ENCODE measurements at regions of chr14 and their contacts with region 1.

Region 1: DNA sequence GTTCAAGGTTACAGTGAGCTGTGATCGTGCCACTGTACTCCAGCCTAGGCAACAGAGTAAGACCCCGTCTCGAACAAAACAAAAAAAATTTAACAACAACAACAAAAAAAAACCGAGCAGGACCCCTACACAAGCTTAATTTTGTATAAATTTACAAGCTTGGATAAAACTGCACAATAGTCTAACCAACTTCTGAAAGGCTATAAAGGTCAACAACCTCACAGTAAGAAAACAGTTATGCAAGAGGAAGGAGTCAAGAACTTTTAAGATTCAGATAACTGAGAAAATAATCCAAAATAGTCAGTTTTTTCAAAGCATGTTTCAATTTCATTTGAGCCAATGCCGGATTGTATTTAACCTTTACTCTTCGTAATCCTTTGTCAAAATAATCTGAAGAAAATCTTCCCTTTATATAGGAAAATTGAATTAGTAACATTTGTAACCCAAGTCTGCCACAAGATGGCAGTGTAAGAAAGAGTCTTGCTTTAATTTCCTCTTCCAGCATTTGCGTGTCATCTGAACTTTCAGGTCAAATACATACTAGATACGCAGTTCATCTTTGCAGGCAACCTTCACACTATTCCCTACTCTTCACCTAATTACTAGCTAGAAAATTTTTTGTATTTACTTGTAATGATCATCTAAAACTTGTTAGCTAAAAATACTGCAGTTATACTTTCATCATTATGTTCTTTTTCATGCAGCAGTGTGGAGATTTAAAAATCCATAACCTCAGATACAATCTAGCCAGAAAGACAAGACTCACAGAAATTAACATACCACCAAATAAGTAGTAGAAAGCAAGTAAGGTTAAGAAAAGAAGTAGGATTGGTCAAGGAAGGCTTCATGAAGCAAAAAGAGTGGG is 5.8 kb downstream of the CCNB1IP1 start:
- DNase-seq: peak; percentile 52
- ATAC-seq: peak; percentile 65
- H3K4me3 Mint-ChIP-seq: no peak overlapping the region
- H3K27ac Mint-ChIP-seq: peak overlapping the region; percentile 13
- H3K4me1 Mint-ChIP-seq: peaks cover 42% of the 10 kb centered on the region
- H3K27me3 Mint-ChIP-seq: no peaks in the 10 kb centered on the region

Region 2: GRCh38 chr14:20059745-20060144 is 267.5 kb before region 1 on chr14 and contains the start of gene OR4L1:
- CTCF ChIA-PET with region 1: no interaction called
- POLR2A ChIA-PET with region 1: no interaction called
- DNase-seq: no peak
- ATAC-seq: no peak
- H3K4me3 Mint-ChIP-seq: no peak within 1 kb of the TSS
- H3K27ac Mint-ChIP-seq: no peak within 1 kb of the TSS
- H3K4me1 Mint-ChIP-seq: no peaks in the 10 kb centered on the region
- H3K27me3 Mint-ChIP-seq: no peaks in the 10 kb centered on the region
- total RNA-seq, gene OR4L1: not detected

Region 3: DNA sequence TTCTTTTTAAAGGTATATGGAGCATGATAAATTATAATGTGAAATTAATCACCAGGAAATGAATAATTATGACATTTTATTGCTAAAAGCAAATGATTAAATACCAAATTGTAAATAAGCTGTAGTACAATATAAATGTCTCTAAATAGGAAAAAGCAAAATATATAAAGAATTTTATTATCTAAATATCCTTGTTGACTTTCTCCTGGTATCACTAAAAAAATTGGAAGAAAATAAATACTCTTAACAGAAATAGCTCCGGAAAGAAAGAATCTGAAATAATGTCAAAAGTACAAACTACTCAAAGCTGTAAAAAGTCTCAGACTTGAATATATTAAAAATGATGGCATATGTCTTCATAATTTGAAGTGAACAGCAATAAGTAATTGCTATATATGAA is 98.6 kb before region 1 on chr14 and contains the start of gene OR11H7:
- CTCF ChIA-PET with region 1: no interaction called
- POLR2A ChIA-PET with region 1: no interaction called
- DNase-seq: no peak
- ATAC-seq: no peak
- H3K4me3 Mint-ChIP-seq: no peak within 1 kb of the TSS
- H3K27ac Mint-ChIP-seq: no peak within 1 kb of the TSS
- H3K4me1 Mint-ChIP-seq: no peaks in the 10 kb centered on the region
- H3K27me3 Mint-ChIP-seq: peaks cover 3% of the 10 kb centered on the region
- total RNA-seq, gene OR11H7: not detected

Region 4: DNA sequence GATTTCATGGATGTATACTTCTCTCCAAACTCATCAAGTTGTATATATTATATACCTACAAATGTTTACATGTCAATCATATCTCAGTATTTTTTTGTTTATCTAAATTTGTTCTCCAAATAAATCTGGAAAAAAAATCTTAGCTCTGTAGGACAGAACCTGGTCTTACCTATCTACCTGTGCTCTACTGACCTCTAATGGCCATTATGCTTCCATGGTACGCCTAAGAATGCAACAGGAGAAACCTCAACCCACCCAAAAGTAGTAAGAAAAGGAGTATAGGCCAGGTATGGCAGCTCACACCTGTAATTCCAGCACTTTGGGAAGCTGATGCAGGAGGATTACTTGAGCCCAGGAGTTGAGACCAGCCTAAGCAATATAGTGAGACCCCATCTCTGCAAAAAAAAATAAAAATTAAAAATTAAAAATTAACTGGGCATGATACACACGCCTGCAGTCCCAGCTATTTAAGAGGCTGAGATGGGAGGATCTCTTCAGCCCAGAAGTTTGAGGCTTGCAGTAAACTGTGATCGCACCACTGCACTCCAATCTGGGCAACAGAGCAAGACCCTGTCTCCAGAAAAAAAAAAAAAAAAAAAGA is 79.5 kb before region 1 on chr14:
- CTCF ChIA-PET with region 1: no interaction called
- POLR2A ChIA-PET with region 1: no interaction called
- DNase-seq: no peak
- ATAC-seq: no peak
- H3K4me3 Mint-ChIP-seq: no peak overlapping the region
- H3K27ac Mint-ChIP-seq: no peak overlapping the region
- H3K4me1 Mint-ChIP-seq: no peaks in the 10 kb centered on the region
- H3K27me3 Mint-ChIP-seq: no peaks in the 10 kb centered on the region

Region 5: DNA sequence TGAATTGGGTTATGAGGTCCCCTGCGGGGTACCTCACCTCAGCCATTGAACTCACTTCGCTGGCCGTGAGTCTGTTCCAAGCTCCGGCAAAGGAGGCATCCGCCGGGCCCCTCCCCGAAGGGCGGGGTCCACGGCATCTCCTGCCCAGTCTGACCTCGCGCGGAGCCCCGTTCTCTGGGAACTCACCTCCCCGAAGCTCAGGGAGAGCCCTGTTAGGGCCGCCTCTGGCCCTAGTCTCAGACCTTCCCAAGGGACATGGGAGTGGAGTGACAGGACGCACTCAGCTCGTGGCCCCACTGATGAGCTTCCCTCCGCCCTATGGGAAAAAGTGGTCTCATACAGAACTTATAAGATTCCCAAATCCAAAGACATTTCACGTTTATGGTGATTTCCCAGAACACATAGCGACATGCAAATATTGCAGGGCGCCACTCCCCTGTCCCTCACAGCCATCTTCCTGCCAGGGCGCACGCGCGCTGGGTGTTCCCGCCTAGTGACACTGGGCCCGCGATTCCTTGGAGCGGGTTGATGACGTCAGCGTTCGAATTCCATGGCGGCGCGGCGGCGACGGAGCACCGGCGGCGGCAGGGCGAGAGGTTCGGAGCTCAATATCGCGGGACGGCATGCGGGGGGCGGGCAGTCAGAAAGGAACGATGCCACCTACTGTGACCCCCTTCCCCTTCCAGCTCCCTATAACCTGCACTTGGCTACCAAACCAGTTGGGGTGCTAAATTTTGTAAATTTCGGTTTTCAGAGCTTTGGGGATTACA is 16.0 kb after region 1 on chr14 and contains the start of gene PARP2:
- CTCF ChIA-PET with region 1: interaction called, 120 read pairs
- POLR2A ChIA-PET with region 1: interaction called, 77 read pairs
- DNase-seq: peak; percentile 95
- ATAC-seq: peak; percentile 94
- H3K4me3 Mint-ChIP-seq: peak within 1 kb of the TSS; percentile 93
- H3K27ac Mint-ChIP-seq: peak within 1 kb of the TSS; percentile 98
- H3K4me1 Mint-ChIP-seq: peaks cover 20% of the 10 kb centered on the region
- H3K27me3 Mint-ChIP-seq: peaks cover 5% of the 10 kb centered on the region
- total RNA-seq, gene PARP2: 29.7 to 32.3 TPM

Region 6: DNA sequence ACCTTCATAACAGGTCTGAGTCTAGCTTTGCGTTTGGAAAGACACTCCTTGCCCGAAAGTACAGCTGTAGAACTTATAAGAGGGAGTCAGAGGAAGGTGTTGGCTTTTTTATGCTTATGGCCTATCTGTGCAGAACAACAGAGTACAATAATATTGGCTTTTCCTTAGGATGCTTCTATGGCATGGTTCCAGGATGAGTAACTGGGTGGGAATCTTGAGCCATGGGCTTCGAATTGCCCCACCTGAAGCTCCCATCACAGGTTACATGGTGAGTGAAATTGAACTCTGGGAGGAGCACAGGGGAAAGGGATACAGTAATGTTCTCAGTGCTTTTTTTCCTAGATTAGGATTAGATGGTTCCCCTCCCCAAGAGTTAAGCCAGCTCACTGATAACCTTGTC is 29.2 kb after region 1 on chr14:
- CTCF ChIA-PET with region 1: interaction called, 20 read pairs
- POLR2A ChIA-PET with region 1: no interaction called
- DNase-seq: no peak
- ATAC-seq: no peak
- H3K4me3 Mint-ChIP-seq: no peak overlapping the region
- H3K27ac Mint-ChIP-seq: no peak overlapping the region
- H3K4me1 Mint-ChIP-seq: no peaks in the 10 kb centered on the region
- H3K27me3 Mint-ChIP-seq: no peaks in the 10 kb centered on the region

Region 7: DNA sequence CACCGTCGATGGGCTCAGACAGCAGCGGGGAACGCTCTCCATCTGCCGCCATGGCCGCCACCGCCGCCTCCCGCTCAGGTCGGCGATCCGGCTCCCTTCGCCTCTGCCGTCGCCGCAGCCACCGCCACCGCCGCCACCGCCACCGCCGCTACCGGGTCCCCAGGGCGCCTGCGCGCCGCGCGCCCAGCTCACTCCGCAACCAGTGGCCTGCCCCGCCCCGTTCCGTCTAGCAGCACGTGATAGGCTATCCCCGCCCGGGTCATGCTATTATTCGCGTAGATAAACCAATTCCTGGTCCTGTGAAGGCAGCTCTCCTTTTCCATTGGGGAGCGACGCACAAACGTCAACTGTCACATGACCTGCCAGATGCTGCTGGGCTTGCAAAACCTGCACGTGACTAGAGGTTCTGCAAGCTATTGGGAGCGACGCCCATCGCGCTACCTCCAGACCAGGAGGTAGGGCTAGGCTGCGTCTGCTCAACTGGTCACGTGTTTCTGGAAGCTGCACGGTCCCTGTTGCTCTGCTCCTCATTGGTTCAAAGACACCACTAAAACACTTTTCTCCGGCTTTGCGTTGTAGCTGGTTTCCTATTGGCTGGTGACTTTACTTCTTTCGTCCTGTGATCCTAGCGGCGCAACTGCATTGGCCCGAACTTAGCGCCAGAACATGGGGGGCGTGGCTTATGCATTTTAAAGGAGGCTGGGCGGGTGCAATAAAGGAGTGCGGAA is 134.2 kb after region 1 on chr14 and contains the start of gene PIP4P1:
- CTCF ChIA-PET with region 1: interaction called, 12 read pairs
- POLR2A ChIA-PET with region 1: no interaction called
- DNase-seq: peak; percentile 99
- ATAC-seq: peak; percentile 97
- H3K4me3 Mint-ChIP-seq: peak within 1 kb of the TSS; percentile 95
- H3K27ac Mint-ChIP-seq: peak within 1 kb of the TSS; percentile 91
- H3K4me1 Mint-ChIP-seq: peaks cover 38% of the 10 kb centered on the region
- H3K27me3 Mint-ChIP-seq: peaks cover 2% of the 10 kb centered on the region
- total RNA-seq, gene PIP4P1: 31.3 to 31.6 TPM

Region 8: DNA sequence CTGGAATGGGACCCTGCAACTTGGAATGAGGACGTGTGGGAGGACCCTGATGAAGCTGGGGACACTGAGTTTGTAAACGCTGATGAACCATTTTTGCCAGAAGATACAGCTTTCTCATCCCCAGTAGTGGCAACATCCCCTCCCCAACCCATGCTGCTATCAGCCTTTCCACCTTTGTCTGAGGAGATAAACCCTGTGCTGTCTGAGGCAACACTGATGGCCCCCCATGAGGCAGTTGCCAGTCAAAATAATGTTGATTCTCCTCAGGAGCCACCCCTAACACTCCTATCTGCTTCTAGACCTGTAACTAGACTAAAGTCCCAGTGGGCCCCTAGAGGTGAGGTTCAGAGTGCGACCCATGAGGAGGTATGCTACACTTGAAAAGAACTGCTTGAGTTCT is 241.2 kb after region 1 on chr14:
- CTCF ChIA-PET with region 1: no interaction called
- POLR2A ChIA-PET with region 1: no interaction called
- DNase-seq: no peak
- ATAC-seq: no peak
- H3K4me3 Mint-ChIP-seq: no peak overlapping the region
- H3K27ac Mint-ChIP-seq: no peak overlapping the region
- H3K4me1 Mint-ChIP-seq: peaks cover 13% of the 10 kb centered on the region
- H3K27me3 Mint-ChIP-seq: peaks cover 8% of the 10 kb centered on the region

Region 9: GRCh38 chr14:20682435-20683124 is 355.3 kb after region 1 on chr14:
- CTCF ChIA-PET with region 1: interaction called, 16 read pairs
- POLR2A ChIA-PET with region 1: no interaction called
- DNase-seq: peak; percentile 83
- ATAC-seq: peak; percentile 60
- H3K4me3 Mint-ChIP-seq: no peak overlapping the region
- H3K27ac Mint-ChIP-seq: no peak overlapping the region
- H3K4me1 Mint-ChIP-seq: peaks cover 14% of the 10 kb centered on the region
- H3K27me3 Mint-ChIP-seq: no peaks in the 10 kb centered on the region